Panc1 (cell line): ENCODE measurements at regions of chr1 and their contacts with region 1.

Region 1: DNA sequence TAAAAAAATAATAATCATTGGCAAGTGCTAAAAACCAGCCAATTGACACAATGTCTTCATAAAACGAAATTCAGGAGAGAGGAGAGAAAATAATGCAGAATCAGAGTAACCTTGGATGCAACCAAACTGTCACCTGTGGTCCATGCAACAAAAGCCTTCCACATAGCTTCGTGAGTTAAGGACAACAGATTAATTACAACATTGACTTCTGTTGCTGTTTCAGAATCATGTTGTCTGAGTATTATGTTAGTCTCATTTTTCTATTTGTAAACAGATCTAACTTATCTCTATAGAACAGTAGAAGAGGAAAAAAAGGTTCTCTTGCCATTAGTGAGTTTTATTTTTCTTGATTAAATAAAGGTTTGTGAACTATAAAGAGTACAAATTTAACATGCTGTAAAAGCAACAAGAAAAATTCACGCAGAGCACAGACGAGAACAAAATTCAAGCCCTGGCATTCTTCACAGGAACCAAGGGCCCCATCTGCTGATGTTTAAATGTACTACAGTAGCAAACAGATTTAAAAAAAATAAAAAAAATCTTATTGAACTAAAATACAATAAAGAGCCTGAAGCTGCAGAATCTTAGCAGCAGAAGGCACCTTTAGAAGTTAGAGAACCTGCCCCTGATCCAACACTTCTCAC is 381.1 kb upstream of the PKN2 start:
- DNase-seq: peak; percentile 5
- ATAC-seq: no peak
- H3K4me3 ChIP-seq: no peak overlapping the region
- H3K27ac ChIP-seq: no peak overlapping the region
- H3K4me1 ChIP-seq: no peaks in the 10 kb centered on the region
- H3K27me3 ChIP-seq: no peaks in the 10 kb centered on the region; the same call in 1 of the 2 replicates
- CTCF ChIP-seq: peak; percentile 63

Region 2: DNA sequence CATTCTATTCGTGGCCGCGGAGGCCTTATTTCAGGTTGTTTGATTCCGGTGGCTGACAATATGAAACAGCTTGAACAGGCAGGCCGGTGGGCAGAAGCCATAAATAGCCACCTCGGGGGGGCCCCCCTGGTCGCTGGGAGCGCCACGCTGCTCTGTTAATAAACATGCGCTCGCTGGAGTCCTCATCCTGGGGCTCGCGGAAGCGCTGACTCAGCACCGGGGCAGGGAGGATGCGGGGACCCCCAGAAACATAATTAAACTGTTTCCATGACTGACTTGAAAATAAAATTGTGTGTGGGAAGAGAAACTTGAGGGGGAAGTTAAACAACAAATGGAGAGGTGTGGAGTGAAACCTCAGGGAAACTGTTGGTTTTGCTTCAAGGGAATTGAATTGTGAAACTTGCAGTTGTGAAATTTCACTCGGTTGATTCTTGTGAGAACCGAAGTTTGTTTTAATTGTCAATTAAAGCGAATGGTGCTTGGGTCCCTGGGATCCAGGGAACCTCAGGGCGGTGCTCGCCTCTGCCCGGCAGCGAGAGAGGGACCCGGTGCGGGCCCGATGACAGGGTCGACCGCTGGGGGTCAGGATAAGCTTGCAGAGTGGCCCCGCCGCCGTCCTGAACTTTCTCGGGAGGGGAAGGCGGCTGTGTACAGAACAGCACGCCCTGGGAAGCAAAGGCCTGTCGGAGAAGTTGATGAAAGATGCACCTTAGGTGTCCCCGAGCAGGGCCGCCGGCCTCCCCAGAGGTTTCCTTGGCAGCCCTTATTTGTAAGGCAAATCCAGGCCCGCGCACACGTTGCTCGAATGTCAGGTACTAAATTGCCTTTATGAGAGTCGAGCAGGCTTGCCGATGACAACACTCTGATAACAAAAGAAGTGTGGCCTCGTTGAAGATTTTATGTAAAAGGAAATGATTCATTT is 1151.2 kb before region 1 on chr1:
- CTCF ChIA-PET with region 1: no interaction called
- POLR2A ChIA-PET with region 1: no interaction called
- in situ Hi-C with region 1: no loop called
- intact Hi-C with region 1: loop called (anchors 10 kb)
- DNase-seq: no peak
- ATAC-seq: peak; percentile 98
- H3K4me3 ChIP-seq: peak overlapping the region; percentile 5 to 38; a peak in 3 of 4 replicates
- H3K27ac ChIP-seq: no peak overlapping the region
- H3K4me1 ChIP-seq: no peaks in the 10 kb centered on the region
- H3K27me3 ChIP-seq: no peaks in the 10 kb centered on the region
- CTCF ChIP-seq: peak; percentile 90